CD8-positive, alpha-beta T cell (primary cell): ENCODE measurements at regions of chr2 and their contacts with region 1.

Region 1: GRCh38 chr2:136858656-136859055 is 93.3 kb downstream of the THSD7B start:
- DNase-seq: no peak
- ATAC-seq: no peak
- H3K4me3 ChIP-seq: no peak overlapping the region
- H3K4me3 Mint-ChIP-seq: no peak overlapping the region
- H3K27ac ChIP-seq: no peak overlapping the region
- H3K27ac Mint-ChIP-seq: no peak overlapping the region
- H3K4me1 ChIP-seq: no peaks in the 10 kb centered on the region
- H3K4me1 Mint-ChIP-seq: no peaks in the 10 kb centered on the region
- H3K27me3 ChIP-seq: no peaks in the 10 kb centered on the region
- H3K27me3 Mint-ChIP-seq: peaks cover 8% of the 10 kb centered on the region
- CTCF ChIP-seq: no peak

Region 2: GRCh38 chr2:136750065-136750464 is 108.6 kb before region 1 on chr2:
- CTCF ChIA-PET with region 1: no interaction called
- POLR2A ChIA-PET with region 1: no interaction called
- intact Hi-C with region 1: no loop called
- DNase-seq: no peak
- ATAC-seq: no peak
- H3K4me3 ChIP-seq: no peak overlapping the region
- H3K4me3 Mint-ChIP-seq: no peak overlapping the region
- H3K27ac ChIP-seq: no peak overlapping the region
- H3K27ac Mint-ChIP-seq: no peak overlapping the region
- H3K4me1 ChIP-seq: no peaks in the 10 kb centered on the region
- H3K4me1 Mint-ChIP-seq: no peaks in the 10 kb centered on the region
- H3K27me3 ChIP-seq: no peaks in the 10 kb centered on the region
- H3K27me3 Mint-ChIP-seq: peaks cover 5% of the 10 kb centered on the region
- CTCF ChIP-seq: no peak

Region 3: GRCh38 chr2:136871424-136871823 is 12.8 kb after region 1 on chr2:
- CTCF ChIA-PET with region 1: no interaction called
- POLR2A ChIA-PET with region 1: no interaction called
- intact Hi-C with region 1: loop called in 1 of 2 experiments (anchors 1 kb)
- DNase-seq: no peak
- ATAC-seq: no peak
- H3K4me3 ChIP-seq: no peak overlapping the region
- H3K4me3 Mint-ChIP-seq: no peak overlapping the region
- H3K27ac ChIP-seq: no peak overlapping the region
- H3K27ac Mint-ChIP-seq: no peak overlapping the region
- H3K4me1 ChIP-seq: no peaks in the 10 kb centered on the region
- H3K4me1 Mint-ChIP-seq: no peaks in the 10 kb centered on the region
- H3K27me3 ChIP-seq: no peaks in the 10 kb centered on the region
- H3K27me3 Mint-ChIP-seq: no peaks in the 10 kb centered on the region
- CTCF ChIP-seq: no peak